ENCODE measurements at regions of chr20 and their contacts with region 1.

Region 1: GRCh38 chr20:37178839-37179670 is at the starts of genes MROH8 and RPN2:
- DNase-seq: peak; percentile 97 to 98 (median 98)
- ATAC-seq: peak; percentile 98
- H3K4me3 ChIP-seq: peak within 1 kb of the TSS; percentile 92
- H3K27ac ChIP-seq: peak within 1 kb of the TSS; percentile 99
- H3K4me1 ChIP-seq: peaks cover 6 to 14% of the 10 kb centered on the region in 2 experiments
- H3K27me3 ChIP-seq: no peaks in the 10 kb centered on the region
- CTCF ChIP-seq: no peak
- EP300 ChIP-seq: no peak; the same call in 1 of the 2 replicates
- POLR2A ChIP-seq: peak; percentile 81
- RAD21 ChIP-seq: no peak
- polyA plus RNA-seq, gene MROH8: 0.21 to 0.41 TPM
- polyA plus RNA-seq, gene RPN2: 487 to 548 TPM

Region 2: GRCh38 chr20:37095599-37096414 is 83.2 kb before region 1 on chr20 and contains the start of gene RBL1:
- CTCF ChIA-PET with region 1: no interaction called
- POLR2A ChIA-PET with region 1: interaction called, 16 read pairs
- in situ Hi-C with region 1: no loop called
- intact Hi-C with region 1: no loop called
- DNase-seq: peak; percentile 85 to 96 (median 89)
- ATAC-seq: peak; percentile 89
- H3K4me3 ChIP-seq: peak within 1 kb of the TSS; percentile 50
- H3K27ac ChIP-seq: peak within 1 kb of the TSS; percentile 99
- H3K4me1 ChIP-seq: peaks cover 24 to 25% of the 10 kb centered on the region in 2 experiments
- H3K27me3 ChIP-seq: no peaks in the 10 kb centered on the region
- CTCF ChIP-seq: peak; percentile 18 to 44 (median 33); a peak in 3 of 6 replicates
- EP300 ChIP-seq: no peak; the same call in 1 of the 2 replicates
- POLR2A ChIP-seq: peak; percentile 91
- RAD21 ChIP-seq: no peak; a peak in 1 of 4 replicates
- polyA plus RNA-seq, gene RBL1: 4.0 to 4.3 TPM

Region 3: DNA sequence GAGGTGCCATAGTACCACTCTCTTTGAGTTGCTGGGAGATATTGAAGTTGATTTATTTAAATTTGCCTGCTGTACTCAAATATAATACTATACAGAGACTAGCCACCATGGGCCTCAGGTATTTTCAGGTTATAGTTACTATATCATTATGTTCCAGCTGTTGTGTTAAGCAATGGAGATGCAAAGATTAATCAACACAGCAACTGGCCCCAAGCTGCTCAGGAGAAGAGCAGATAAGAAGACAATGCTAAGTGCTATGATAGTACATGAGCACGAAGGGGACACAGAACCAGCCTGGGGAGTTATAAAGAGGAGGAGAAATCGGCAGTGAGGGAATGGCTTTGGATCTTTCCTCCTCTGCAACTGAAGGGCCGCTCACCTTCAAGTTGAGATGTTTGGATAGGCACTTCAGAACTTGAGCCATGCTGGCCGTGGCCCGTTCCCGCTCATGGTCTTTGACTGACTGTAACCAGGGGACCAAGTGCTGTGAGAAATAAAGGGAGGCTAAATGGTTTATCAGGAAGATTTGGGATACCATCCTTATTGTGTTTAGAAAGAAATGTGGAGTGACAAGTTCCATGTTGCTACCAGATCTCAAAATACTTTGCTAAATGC is 24.3 kb before region 1 on chr20:
- CTCF ChIA-PET with region 1: no interaction called
- POLR2A ChIA-PET with region 1: interaction called, 14 read pairs
- in situ Hi-C with region 1: no loop called
- intact Hi-C with region 1: no loop called
- DNase-seq: peak; percentile 52 to 81 (median 70)
- ATAC-seq: peak; percentile 89
- H3K4me3 ChIP-seq: no peak overlapping the region
- H3K27ac ChIP-seq: peak overlapping the region; percentile 56; the same call in 2 of the 3 replicates
- H3K4me1 ChIP-seq: peaks cover 19 to 20% of the 10 kb centered on the region in 2 experiments; a peak in 4 of 5 replicates
- H3K27me3 ChIP-seq: no peaks in the 10 kb centered on the region
- CTCF ChIP-seq: no peak
- EP300 ChIP-seq: peak; percentile 96
- POLR2A ChIP-seq: no peak
- RAD21 ChIP-seq: peak in 1 of 2 experiments; percentile 17; a peak in 1 of 4 replicates

Region 4: DNA sequence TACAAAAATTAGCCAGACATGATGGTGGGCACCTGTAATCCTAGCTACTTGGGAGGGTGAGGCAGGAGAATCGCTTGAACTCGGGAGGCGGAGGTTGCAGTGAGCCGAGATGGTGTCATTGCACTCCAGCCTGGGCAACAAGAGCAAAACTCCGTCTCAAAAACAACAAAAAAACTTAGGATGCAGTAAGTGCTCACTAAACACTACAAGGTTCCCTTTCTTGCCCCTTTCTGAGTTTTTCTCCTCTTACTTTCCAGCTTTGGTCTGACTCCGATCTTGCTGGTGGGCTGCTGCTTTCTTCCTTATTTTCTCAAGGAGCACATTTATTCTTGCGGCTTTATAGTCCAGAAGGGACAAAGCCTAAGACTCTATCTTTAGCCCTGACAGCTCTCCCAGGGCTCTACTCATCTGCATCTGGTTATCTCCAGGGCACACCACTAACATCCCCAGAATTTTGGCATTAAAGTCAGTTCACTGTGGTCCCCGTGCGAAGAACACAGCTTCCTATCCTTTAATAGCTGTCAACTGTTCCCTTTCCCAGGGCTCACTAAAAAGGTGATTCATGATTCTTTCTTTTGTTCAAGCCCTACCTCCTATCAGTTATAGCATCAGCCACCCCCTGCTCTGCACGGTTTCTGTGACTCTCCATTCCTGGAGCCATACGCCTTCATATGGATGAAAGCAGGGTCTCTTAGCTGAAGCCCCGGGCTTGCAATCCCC is 17.1 kb before region 1 on chr20:
- CTCF ChIA-PET with region 1: no interaction called
- POLR2A ChIA-PET with region 1: interaction called, 54 read pairs
- in situ Hi-C with region 1: no loop called
- intact Hi-C with region 1: no loop called
- DNase-seq: peak; percentile 46 to 69 (median 62)
- ATAC-seq: peak; percentile 58
- H3K4me3 ChIP-seq: no peak overlapping the region
- H3K27ac ChIP-seq: peak overlapping the region; percentile 37; the same call in 1 of the 3 replicates
- H3K4me1 ChIP-seq: peaks cover 26 to 37% of the 10 kb centered on the region in 2 experiments; a peak in 4 of 5 replicates
- H3K27me3 ChIP-seq: no peaks in the 10 kb centered on the region
- CTCF ChIP-seq: no peak
- EP300 ChIP-seq: no peak
- POLR2A ChIP-seq: no peak
- RAD21 ChIP-seq: no peak

Region 5: GRCh38 chr20:37192137-37192854 is 13.2 kb after region 1 on chr20:
- CTCF ChIA-PET with region 1: no interaction called
- POLR2A ChIA-PET with region 1: interaction called, 35 read pairs
- in situ Hi-C with region 1: no loop called
- intact Hi-C with region 1: no loop called
- DNase-seq: peak; percentile 73 to 82 (median 78)
- ATAC-seq: peak; percentile 94
- H3K4me3 ChIP-seq: no peak overlapping the region
- H3K27ac ChIP-seq: no peak overlapping the region
- H3K4me1 ChIP-seq: peaks cover 0 to 2% of the 10 kb centered on the region in 2 experiments; a peak in 1 of 5 replicates
- H3K27me3 ChIP-seq: no peaks in the 10 kb centered on the region
- CTCF ChIP-seq: peak; percentile 86 to 93 (median 88)
- EP300 ChIP-seq: no peak
- POLR2A ChIP-seq: no peak
- RAD21 ChIP-seq: peak; percentile 37 to 49; a peak in 3 of 4 replicates

Region 6: GRCh38 chr20:37968841-37969401 is 789.9 kb after region 1 on chr20:
- CTCF ChIA-PET with region 1: no interaction called
- POLR2A ChIA-PET with region 1: no interaction called
- in situ Hi-C with region 1: no loop called
- intact Hi-C with region 1: no loop called
- DNase-seq: no peak
- ATAC-seq: no peak
- H3K4me3 ChIP-seq: no peak overlapping the region
- H3K27ac ChIP-seq: no peak overlapping the region
- H3K4me1 ChIP-seq: peaks cover 6 to 11% of the 10 kb centered on the region in 2 experiments; a peak in 3 of 5 replicates
- H3K27me3 ChIP-seq: no peaks in the 10 kb centered on the region; a peak in 1 of 5 replicates
- CTCF ChIP-seq: no peak
- EP300 ChIP-seq: no peak
- POLR2A ChIP-seq: no peak
- RAD21 ChIP-seq: no peak